ENCODE measurements at regions of chr20 and their contacts with region 1.

Region 1: DNA sequence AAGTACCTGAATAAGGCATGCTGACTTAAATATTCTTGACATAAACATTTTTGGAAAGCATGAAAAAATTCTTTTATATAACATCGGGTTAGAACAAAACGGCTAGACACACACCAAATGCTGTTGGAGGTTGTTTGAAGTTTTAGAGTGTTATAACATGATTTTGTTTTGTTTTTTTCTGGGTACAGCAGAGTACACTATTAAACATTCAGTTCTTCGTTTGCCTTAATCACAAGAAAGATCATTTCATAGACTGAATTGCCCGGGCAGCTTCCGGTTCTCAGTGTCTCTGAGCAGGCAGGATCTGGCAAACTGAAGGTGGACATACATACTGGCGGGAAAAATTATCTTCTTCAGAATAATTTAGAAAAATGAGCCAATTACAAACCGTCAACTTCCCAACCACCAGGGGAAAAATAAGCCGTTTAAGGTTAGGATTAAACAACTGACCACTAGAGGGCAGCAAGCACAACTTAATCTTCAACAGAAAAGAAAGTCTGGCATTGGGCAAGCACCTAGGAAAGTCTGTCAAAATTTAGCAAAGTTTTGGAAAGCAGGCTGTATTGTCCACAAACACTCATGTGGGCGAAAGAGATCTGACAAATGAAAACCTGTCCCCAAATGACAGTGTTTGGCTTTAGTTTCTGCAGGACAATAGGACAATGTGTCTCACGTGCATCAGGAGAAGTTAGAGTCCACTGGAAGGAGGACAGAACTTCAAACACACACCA is 15.0 kb downstream of the ZNF217 start:
- DNase-seq: peak; percentile 77
- H3K4me3 Mint-ChIP-seq: peak overlapping the region; percentile 71
- H3K27ac Mint-ChIP-seq: peak overlapping the region; percentile 92
- H3K4me1 Mint-ChIP-seq: peaks cover 90% of the 10 kb centered on the region
- H3K27me3 Mint-ChIP-seq: no peaks in the 10 kb centered on the region

Region 2: DNA sequence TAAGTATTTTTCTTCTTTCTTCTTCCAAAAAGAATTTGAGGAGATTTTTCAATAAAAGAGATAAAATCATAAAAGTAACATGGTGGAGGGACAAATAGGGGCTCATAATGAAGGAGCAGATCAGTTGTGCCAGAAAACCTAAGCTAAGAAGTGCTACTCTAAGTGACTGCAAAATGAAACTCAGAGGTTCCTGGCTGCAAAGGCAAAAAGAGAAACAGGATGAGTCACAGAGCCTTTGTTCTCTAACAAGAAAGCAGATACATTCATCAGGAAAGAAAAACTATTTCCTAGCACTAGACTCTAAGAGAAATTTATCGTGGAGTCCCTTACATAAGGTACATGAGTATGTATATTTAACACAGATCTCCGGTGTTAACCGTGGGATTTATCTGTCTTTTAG is 556.7 kb before region 1 on chr20:
- CTCF ChIA-PET with region 1: no interaction called
- intact Hi-C with region 1: loop called (anchors 5 kb)
- DNase-seq: peak; percentile 64
- H3K4me3 Mint-ChIP-seq: peak overlapping the region; percentile 29
- H3K27ac Mint-ChIP-seq: peak overlapping the region; percentile 93
- H3K4me1 Mint-ChIP-seq: peaks cover 85% of the 10 kb centered on the region
- H3K27me3 Mint-ChIP-seq: no peaks in the 10 kb centered on the region

Region 3: DNA sequence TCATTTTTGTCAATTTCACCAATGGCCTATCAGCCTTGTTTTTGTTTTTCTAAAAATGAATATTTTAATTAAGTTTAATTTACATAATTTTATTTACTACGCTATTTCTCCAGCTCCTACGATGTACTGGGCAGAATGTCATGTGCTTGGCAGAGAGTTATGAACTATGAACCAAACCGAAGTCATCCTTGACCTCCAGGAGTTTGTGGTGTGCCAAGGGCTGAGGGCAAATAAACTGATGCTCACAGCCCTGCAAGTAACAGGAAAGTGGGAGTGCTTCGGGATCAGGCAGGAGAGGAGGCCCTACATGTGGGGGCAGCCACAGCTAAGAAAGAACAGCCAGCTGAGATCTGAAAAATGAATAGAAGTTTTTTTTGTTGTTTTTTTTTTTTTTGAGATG is 23.6 kb before region 1 on chr20:
- CTCF ChIA-PET with region 1: no interaction called
- intact Hi-C with region 1: no loop called
- DNase-seq: no peak
- H3K4me3 Mint-ChIP-seq: no peak overlapping the region
- H3K27ac Mint-ChIP-seq: no peak overlapping the region
- H3K4me1 Mint-ChIP-seq: no peaks in the 10 kb centered on the region
- H3K27me3 Mint-ChIP-seq: no peaks in the 10 kb centered on the region

Region 4: GRCh38 chr20:53594068-53595017 is 15.7 kb after region 1 on chr20:
- CTCF ChIA-PET with region 1: interaction called, 3 read pairs
- intact Hi-C with region 1: loop called (anchors 1 kb)
- DNase-seq: peak; percentile 96
- H3K4me3 Mint-ChIP-seq: peak overlapping the region; percentile 94
- H3K27ac Mint-ChIP-seq: peak overlapping the region; percentile 99
- H3K4me1 Mint-ChIP-seq: peaks cover 51% of the 10 kb centered on the region
- H3K27me3 Mint-ChIP-seq: no peaks in the 10 kb centered on the region

Region 5: GRCh38 chr20:53643031-53643832 is 64.6 kb after region 1 on chr20:
- CTCF ChIA-PET with region 1: interaction called, 3 read pairs
- intact Hi-C with region 1: loop called (anchors 1 kb)
- DNase-seq: peak; percentile 82
- H3K4me3 Mint-ChIP-seq: peak overlapping the region; percentile 66
- H3K27ac Mint-ChIP-seq: peak overlapping the region; percentile 85
- H3K4me1 Mint-ChIP-seq: peaks cover 40% of the 10 kb centered on the region
- H3K27me3 Mint-ChIP-seq: no peaks in the 10 kb centered on the region

Region 6: GRCh38 chr20:53750827-53751619 is 172.4 kb after region 1 on chr20:
- CTCF ChIA-PET with region 1: no interaction called
- intact Hi-C with region 1: loop called (anchors 2 kb)
- DNase-seq: peak; percentile 66
- H3K4me3 Mint-ChIP-seq: peak overlapping the region; percentile 32
- H3K27ac Mint-ChIP-seq: peak overlapping the region; percentile 91
- H3K4me1 Mint-ChIP-seq: peaks cover 71% of the 10 kb centered on the region
- H3K27me3 Mint-ChIP-seq: no peaks in the 10 kb centered on the region

Region 7: DNA sequence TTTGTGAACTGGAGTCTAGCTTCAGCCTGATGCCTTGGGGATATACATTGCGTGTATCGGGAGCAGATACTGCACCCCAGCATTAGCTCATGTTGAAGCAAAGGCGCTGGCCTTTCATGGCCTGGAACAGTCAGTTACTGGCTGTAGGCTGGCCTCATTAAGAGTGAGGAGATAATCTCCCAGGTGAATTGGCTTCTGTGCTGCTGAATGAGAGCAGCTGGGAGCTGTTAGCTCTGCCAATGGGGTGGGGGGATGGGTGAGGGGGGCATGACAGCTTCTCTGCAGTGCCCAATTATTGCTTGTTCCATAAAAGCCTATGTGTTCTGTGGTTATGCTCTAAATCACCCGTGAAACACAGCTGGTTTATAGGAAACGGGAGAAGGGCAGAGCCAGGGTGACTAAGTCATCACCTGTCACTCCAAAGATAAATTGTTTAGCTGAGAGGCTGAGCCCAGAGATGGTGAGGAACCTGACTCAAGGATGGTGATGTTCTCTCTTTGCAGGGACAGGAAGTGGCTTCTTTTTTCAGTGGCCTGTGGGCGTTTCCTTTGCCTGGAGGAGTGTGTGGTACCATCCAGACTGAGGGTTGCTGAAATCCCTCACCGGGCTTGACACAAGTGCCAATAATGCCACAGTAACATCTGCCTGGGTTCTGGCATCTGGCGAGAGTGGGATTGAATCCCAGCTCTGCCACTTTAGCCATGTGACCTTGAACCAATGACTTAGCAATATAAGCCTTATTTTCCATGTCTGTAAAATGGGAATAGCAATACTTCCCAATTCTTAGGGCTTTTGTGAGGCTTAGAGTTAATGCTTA is 320.9 kb after region 1 on chr20:
- CTCF ChIA-PET with region 1: interaction called, 3 read pairs
- intact Hi-C with region 1: loop called (anchors 1 kb)
- DNase-seq: peak; percentile 94
- H3K4me3 Mint-ChIP-seq: no peak overlapping the region
- H3K27ac Mint-ChIP-seq: peak overlapping the region; percentile 85
- H3K4me1 Mint-ChIP-seq: peaks cover 49% of the 10 kb centered on the region
- H3K27me3 Mint-ChIP-seq: no peaks in the 10 kb centered on the region

Region 8: DNA sequence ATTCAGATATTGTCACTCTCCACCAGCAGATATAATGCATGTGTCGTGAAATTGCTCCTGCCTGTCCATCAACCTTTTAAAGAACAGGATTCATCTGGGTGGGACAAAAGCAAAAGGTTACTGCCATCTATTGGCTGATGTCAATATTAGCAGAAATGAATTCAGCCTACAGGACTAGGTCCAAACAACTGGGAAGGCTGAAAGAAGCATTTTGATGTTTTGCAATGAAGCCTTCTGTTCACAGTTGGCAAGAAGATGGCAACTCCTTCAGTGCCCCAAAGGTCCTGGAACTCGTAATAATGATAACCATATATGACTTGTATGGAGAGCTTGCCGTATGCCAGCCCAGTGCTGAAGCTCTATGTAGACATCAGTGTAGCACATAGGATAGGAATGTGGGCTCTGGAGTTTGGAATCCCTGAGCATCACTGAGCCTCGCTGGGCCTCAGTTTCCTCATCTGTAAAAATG is 484.2 kb after region 1 on chr20:
- CTCF ChIA-PET with region 1: no interaction called
- intact Hi-C with region 1: loop called (anchors 2 kb)
- DNase-seq: no peak
- H3K4me3 Mint-ChIP-seq: no peak overlapping the region
- H3K27ac Mint-ChIP-seq: no peak overlapping the region
- H3K4me1 Mint-ChIP-seq: peaks cover 8% of the 10 kb centered on the region
- H3K27me3 Mint-ChIP-seq: no peaks in the 10 kb centered on the region

Measured in activated naive CD4-positive, alpha-beta T cell treated with anti-CD3 and anti-CD28 coated beads for 36 hours (primary cell).